ENCODE measurements at regions of chr18 and their contacts with region 1.

Region 1: DNA sequence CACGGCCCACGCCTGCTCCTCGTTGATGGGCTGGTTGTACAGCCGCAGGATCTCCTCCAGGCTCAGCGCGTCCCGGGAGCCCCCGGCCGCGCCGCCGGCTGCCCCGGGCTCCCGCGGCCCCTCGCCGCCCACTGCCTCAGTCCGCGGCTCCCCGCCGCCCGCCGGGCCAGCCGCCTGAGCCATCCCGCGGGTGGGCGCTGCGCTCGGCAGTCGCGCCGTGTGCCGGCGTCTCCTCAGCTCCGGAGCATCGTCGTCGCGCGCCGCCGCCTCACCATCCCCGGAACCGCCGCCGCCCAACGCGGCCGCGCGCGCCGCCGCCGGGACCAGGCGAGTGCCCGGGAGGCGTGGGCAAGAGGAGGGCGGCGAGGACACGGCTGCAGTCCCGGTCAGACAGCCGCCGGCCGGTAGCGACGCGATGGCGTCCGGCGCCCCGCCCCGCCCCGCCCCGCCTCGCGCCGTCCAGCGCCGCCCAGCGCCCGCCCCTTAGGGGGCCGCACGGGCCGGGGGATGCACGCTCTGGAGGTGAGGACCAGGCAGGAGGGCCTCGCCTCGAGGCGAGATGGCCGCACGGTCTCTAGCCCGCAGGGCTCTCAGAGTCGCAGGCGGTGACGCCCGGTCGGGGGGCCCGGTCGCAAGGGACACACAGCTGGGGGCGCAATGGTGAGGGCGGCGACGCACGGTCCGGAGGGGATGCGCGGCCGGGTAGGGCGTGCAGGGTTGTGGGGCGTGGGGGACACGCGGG is at the start of gene SPIRE1:
- DNase-seq: peak; percentile 61
- ATAC-seq: peak; percentile 57
- H3K4me3 Mint-ChIP-seq: peak within 1 kb of the TSS; percentile 71
- H3K27ac Mint-ChIP-seq: no peak within 1 kb of the TSS
- H3K4me1 Mint-ChIP-seq: peaks cover 17% of the 10 kb centered on the region
- H3K27me3 Mint-ChIP-seq: peaks cover 20% of the 10 kb centered on the region
- total RNA-seq, gene SPIRE1: 3.0 to 3.8 TPM

Region 2: DNA sequence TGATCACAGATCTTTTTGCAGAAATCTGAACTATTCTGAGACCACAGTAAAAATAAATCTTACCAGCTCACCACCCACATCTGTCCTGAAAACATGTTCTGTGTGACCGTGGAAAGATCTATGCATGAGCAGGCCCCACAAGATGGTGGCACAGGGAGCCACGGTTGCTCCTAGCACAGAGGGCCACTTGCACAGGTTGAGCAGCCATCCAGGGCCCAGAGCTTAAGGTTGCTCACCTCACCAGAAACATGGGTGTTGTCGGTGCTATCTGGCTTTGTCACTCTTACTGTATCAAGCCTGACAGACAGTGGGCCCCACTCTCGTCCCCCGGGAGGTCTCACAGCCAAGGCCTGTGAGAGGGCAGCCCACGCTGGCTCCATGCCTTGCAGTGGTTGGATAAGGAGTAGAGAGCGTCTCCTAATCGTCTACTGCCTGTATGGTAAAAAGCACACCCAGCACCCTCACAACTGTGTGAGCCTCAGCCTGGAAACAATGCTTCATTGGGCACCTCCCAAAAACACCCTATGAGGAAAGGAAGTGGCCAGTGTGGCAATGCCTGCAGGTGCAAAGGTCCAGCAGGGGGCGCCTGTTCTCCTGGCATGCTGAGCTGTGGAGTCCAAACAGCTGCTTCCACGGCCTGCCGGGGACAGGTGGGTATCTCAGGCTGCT is 330.2 kb before region 1 on chr18:
- CTCF ChIA-PET with region 1: interaction called, 12 read pairs
- POLR2A ChIA-PET with region 1: no interaction called
- intact Hi-C with region 1: loop called (anchors 1 to 5 kb)
- DNase-seq: peak; percentile 90
- ATAC-seq: peak; percentile 95
- H3K4me3 Mint-ChIP-seq: no peak overlapping the region
- H3K27ac Mint-ChIP-seq: no peak overlapping the region
- H3K4me1 Mint-ChIP-seq: peaks cover 4% of the 10 kb centered on the region
- H3K27me3 Mint-ChIP-seq: no peaks in the 10 kb centered on the region

Region 3: GRCh38 chr18:12391618-12392165 is 266.2 kb before region 1 on chr18:
- CTCF ChIA-PET with region 1: interaction called, 21 read pairs
- POLR2A ChIA-PET with region 1: interaction called, 6 read pairs
- intact Hi-C with region 1: loop called (anchors 1 kb)
- DNase-seq: peak; percentile 72
- ATAC-seq: peak; percentile 97
- H3K4me3 Mint-ChIP-seq: no peak overlapping the region
- H3K27ac Mint-ChIP-seq: no peak overlapping the region
- H3K4me1 Mint-ChIP-seq: no peaks in the 10 kb centered on the region
- H3K27me3 Mint-ChIP-seq: peaks cover 6% of the 10 kb centered on the region

Region 4: DNA sequence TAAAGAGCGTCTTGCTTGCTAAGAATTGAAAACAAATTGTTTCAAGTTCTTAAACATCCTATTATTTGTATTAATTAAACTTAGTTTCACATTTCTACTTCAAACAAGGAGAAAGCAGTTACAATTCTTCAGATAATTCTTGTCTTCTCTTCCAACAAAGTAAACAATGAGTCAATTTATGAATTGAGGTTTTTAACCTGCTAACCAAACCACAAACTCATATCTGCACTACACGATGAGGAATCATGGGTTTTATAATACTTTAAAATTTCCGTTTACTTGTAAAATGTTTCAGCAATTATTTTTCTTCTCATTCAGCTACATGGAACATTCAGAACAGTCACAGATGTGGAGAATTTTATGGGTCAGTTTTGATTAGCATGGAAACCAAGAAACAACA is 114.2 kb before region 1 on chr18:
- CTCF ChIA-PET with region 1: interaction called, 3 read pairs
- POLR2A ChIA-PET with region 1: no interaction called
- intact Hi-C with region 1: loop called (anchors 2 to 5 kb)
- DNase-seq: no peak
- ATAC-seq: no peak
- H3K4me3 Mint-ChIP-seq: no peak overlapping the region
- H3K27ac Mint-ChIP-seq: no peak overlapping the region
- H3K4me1 Mint-ChIP-seq: peaks cover 6% of the 10 kb centered on the region
- H3K27me3 Mint-ChIP-seq: no peaks in the 10 kb centered on the region

Region 5: GRCh38 chr18:12574494-12575185 is 83.2 kb before region 1 on chr18:
- CTCF ChIA-PET with region 1: no interaction called
- POLR2A ChIA-PET with region 1: no interaction called
- intact Hi-C with region 1: no loop called
- DNase-seq: no peak
- ATAC-seq: no peak
- H3K4me3 Mint-ChIP-seq: no peak overlapping the region
- H3K27ac Mint-ChIP-seq: no peak overlapping the region
- H3K4me1 Mint-ChIP-seq: no peaks in the 10 kb centered on the region
- H3K27me3 Mint-ChIP-seq: no peaks in the 10 kb centered on the region

Measured in activated CD4-positive, alpha-beta T cell treated with anti-CD3 and anti-CD28 coated beads for 36 hours (primary cell).